HepG2 (cell line): ENCODE measurements at regions of chr7 and their contacts with region 1.

Region 1: GRCh38 chr7:27196287-27196767 is 3.6 kb downstream of the HOXA13 start:
- DNase-seq: peak; percentile 54
- ATAC-seq: no peak
- H3K4me3 ChIP-seq: no peak overlapping the region
- H3K27ac ChIP-seq: no peak overlapping the region
- H3K4me1 ChIP-seq: peaks cover 27% of the 10 kb centered on the region
- H3K27me3 ChIP-seq: peaks cover 7 to 61% of the 10 kb centered on the region in 2 experiments
- CTCF ChIP-seq: peak; percentile 85
- EP300 ChIP-seq: no peak
- POLR2A ChIP-seq: no peak
- RAD21 ChIP-seq: peak; percentile 77

Region 2: DNA sequence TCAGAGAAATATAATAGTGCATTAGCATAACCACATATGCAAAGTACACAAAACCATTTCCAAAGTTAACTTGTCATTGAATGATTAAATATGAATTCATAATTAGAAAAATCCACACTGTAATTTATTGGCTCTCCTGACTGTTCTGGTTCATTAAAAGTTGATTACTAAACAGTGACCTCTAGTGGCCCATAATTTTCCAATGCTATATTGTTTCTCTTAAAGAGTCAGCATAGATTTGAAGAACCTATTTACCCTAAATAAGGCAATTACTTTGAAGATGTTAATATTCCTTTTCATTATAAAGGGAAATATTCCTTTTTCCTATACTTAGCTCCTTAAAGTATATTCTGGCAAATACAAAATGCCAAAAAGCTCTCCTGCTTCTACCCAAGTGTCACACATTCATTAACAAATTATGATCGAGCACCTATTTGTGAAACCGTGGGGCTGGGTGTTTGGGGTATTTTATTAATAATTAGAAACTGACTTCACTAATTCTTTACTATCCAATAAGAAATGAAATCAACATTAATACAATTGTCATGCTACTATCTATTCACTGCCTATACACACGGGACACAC is 380.1 kb after region 1 on chr7:
- CTCF ChIA-PET with region 1: no interaction called
- POLR2A ChIA-PET with region 1: no interaction called
- in situ Hi-C with region 1: loop called (anchors 10 kb)
- intact Hi-C with region 1: loop called (anchors 1 kb)
- DNase-seq: peak; percentile 21
- ATAC-seq: no peak
- H3K4me3 ChIP-seq: no peak overlapping the region
- H3K27ac ChIP-seq: no peak overlapping the region
- H3K4me1 ChIP-seq: peaks cover 27% of the 10 kb centered on the region
- H3K27me3 ChIP-seq: no peaks in the 10 kb centered on the region
- CTCF ChIP-seq: peak; percentile 52
- EP300 ChIP-seq: no peak
- POLR2A ChIP-seq: no peak
- RAD21 ChIP-seq: no peak

Region 3: DNA sequence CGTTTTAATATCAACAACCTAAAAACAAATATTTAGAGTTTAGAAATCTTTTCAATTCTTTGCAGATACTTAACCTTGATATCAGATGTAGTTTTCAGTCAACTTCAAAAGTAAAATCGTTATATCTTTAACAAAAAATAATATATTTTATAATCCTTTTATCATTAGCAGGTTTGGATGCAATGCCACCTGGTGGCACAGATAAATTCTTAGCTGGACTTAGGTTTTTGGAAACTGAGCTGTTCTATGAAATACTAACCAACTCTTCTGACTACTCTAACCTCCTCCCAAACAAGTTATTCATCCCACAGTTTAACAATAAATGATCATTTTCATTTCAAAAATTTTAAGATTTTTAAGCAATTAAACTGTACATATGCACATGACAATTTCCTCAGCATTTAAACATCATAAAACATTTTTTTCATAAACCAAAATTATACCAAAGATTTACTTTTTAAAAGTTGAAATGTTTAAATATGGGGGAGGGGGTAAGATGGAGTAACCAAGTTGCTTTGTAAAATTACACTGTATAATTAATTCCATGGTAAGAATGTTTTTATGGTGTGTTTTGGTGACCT is 409.5 kb after region 1 on chr7:
- CTCF ChIA-PET with region 1: no interaction called
- POLR2A ChIA-PET with region 1: no interaction called
- in situ Hi-C with region 1: no loop called
- intact Hi-C with region 1: loop called (anchors 10 kb)
- DNase-seq: peak; percentile 39
- ATAC-seq: peak; percentile 64; the same call in 2 of the 3 replicates
- H3K4me3 ChIP-seq: peak overlapping the region; percentile 9 to 38 (median 13); a peak in 5 of 6 replicates
- H3K27ac ChIP-seq: peak overlapping the region; percentile 70
- H3K4me1 ChIP-seq: peaks cover 63% of the 10 kb centered on the region
- H3K27me3 ChIP-seq: no peaks in the 10 kb centered on the region
- CTCF ChIP-seq: peak; percentile 34
- EP300 ChIP-seq: no peak
- POLR2A ChIP-seq: no peak
- RAD21 ChIP-seq: no peak

Region 4: GRCh38 chr7:27774717-27775328 is 578.5 kb after region 1 on chr7:
- CTCF ChIA-PET with region 1: no interaction called
- POLR2A ChIA-PET with region 1: no interaction called
- in situ Hi-C with region 1: no loop called
- intact Hi-C with region 1: loop called (anchors 5 kb)
- DNase-seq: peak; percentile 39
- ATAC-seq: no peak
- H3K4me3 ChIP-seq: no peak overlapping the region
- H3K27ac ChIP-seq: no peak overlapping the region
- H3K4me1 ChIP-seq: no peaks in the 10 kb centered on the region
- H3K27me3 ChIP-seq: no peaks in the 10 kb centered on the region
- CTCF ChIP-seq: peak; percentile 60
- EP300 ChIP-seq: no peak
- POLR2A ChIP-seq: no peak
- RAD21 ChIP-seq: peak; percentile 36; the same call in 1 of the 2 replicates

Region 5: DNA sequence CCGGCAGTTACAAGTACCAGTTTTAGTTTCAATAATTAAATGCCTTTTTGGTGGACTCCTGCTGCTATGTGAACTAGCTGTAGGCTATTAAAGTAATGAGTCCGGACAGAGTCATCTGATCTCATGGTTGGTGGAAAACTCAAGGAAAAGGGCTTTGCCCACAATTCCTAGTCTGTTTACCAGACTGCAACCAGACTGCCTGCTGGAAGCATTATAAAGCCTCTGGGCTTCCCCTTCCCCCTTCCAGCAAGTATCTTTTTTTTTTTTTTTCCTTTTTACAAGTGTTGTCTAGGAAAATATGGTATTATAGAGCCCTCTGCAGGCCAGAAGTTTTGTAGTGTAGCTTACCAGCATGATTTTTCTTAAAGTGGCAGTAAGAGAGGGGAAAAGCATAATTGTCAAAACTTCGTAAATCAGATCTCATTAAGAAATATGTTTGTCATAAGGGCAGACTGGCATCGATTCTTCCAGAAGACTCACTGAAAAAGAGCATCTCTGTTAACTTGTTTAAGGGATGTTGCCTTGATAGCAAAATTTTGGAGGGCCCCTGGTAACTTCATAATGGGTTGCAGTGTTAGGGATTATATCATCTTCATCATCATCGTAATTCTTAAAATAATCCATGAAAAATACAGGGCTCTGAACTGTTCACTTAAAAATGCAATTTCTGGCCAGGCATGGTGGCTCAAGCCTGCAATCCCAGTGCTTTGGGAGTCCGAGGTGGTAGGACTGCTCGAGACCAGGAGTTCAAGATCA is 724.9 kb after region 1 on chr7:
- CTCF ChIA-PET with region 1: interaction called, 17 read pairs
- POLR2A ChIA-PET with region 1: no interaction called
- in situ Hi-C with region 1: loop called (anchors 5 kb)
- intact Hi-C with region 1: loop called (anchors 1 kb)
- DNase-seq: peak; percentile 70
- ATAC-seq: peak; percentile 71
- H3K4me3 ChIP-seq: no peak overlapping the region
- H3K27ac ChIP-seq: no peak overlapping the region
- H3K4me1 ChIP-seq: no peaks in the 10 kb centered on the region
- H3K27me3 ChIP-seq: peaks cover 0 to 22% of the 10 kb centered on the region in 2 experiments; a peak in 4 of 5 replicates
- CTCF ChIP-seq: peak; percentile 62
- EP300 ChIP-seq: no peak
- POLR2A ChIP-seq: no peak
- RAD21 ChIP-seq: no peak

Region 6: GRCh38 chr7:28020302-28020940 is 824.1 kb after region 1 on chr7:
- CTCF ChIA-PET with region 1: interaction called, 22 read pairs
- POLR2A ChIA-PET with region 1: no interaction called
- in situ Hi-C with region 1: loop called (anchors 5 kb)
- intact Hi-C with region 1: loop called (anchors 1 kb)
- DNase-seq: peak; percentile 66
- ATAC-seq: peak; percentile 97
- H3K4me3 ChIP-seq: no peak overlapping the region
- H3K27ac ChIP-seq: no peak overlapping the region
- H3K4me1 ChIP-seq: no peaks in the 10 kb centered on the region
- H3K27me3 ChIP-seq: peaks cover 2 to 50% of the 10 kb centered on the region in 2 experiments; a peak in 4 of 5 replicates
- CTCF ChIP-seq: peak; percentile 94
- EP300 ChIP-seq: no peak
- POLR2A ChIP-seq: no peak
- RAD21 ChIP-seq: peak; percentile 76